ENCODE measurements at regions of chr5 and their contacts with region 1.

Region 1: GRCh38 chr5:126370796-126371718 is 52.2 kb upstream of the GRAMD2B start:
- DNase-seq: peak; percentile 69
- H3K4me3 Mint-ChIP-seq: peak overlapping the region; percentile 92
- H3K27ac Mint-ChIP-seq: peak overlapping the region; percentile 97
- H3K4me1 Mint-ChIP-seq: peaks cover 58% of the 10 kb centered on the region
- H3K27me3 Mint-ChIP-seq: no peaks in the 10 kb centered on the region
- CTCF ChIP-seq: peak; percentile 40

Region 2: DNA sequence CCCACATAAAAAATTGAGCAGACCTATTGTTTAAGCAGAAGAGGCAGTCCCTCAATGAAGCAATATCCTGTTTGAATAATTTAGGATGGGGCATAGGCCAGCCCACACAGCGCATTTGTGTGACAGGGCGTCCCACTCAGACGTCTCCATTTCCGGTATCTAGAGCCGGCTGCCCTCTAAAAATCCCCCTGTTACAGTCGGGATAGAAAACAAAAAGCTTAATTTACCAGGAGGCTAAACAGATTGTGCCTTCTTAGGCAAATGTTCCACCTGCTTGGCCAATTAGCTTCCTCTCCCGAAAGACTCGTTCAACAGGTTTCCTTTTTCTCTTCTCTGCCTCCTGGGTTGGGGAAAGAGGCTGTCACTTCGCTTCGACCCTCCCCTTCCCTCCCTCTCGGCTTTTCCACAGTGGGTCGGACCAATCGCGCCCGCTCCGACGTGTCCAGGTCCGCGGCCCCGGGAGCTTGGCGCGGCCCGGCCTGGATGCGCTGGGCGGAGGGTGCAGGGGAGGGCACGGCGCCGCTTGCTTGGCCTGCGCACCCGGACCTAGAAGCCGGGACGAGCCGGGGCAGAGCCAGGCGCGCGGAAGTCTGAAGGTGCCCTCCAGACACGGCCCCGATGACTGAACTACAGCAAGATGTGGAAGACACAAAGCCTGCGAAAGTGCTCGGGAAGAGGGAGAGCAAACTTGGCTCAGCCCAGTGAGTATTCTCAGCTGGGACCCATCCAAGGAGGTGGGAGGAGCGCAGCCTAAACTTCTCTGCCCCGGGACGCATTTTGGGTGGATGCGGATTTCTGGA is 52.1 kb after region 1 on chr5 and contains the start of gene GRAMD2B:
- CTCF ChIA-PET with region 1: interaction called, 8 read pairs
- intact Hi-C with region 1: loop called (anchors 5 kb)
- DNase-seq: peak; percentile 85
- H3K4me3 Mint-ChIP-seq: peak within 1 kb of the TSS; percentile 93
- H3K27ac Mint-ChIP-seq: peak within 1 kb of the TSS; percentile 81
- H3K4me1 Mint-ChIP-seq: peaks cover 13% of the 10 kb centered on the region
- H3K27me3 Mint-ChIP-seq: no peaks in the 10 kb centered on the region
- CTCF ChIP-seq: no peak
- total RNA-seq, gene GRAMD2B: 23.0 and 23.3 TPM in 2 replicates

Region 3: DNA sequence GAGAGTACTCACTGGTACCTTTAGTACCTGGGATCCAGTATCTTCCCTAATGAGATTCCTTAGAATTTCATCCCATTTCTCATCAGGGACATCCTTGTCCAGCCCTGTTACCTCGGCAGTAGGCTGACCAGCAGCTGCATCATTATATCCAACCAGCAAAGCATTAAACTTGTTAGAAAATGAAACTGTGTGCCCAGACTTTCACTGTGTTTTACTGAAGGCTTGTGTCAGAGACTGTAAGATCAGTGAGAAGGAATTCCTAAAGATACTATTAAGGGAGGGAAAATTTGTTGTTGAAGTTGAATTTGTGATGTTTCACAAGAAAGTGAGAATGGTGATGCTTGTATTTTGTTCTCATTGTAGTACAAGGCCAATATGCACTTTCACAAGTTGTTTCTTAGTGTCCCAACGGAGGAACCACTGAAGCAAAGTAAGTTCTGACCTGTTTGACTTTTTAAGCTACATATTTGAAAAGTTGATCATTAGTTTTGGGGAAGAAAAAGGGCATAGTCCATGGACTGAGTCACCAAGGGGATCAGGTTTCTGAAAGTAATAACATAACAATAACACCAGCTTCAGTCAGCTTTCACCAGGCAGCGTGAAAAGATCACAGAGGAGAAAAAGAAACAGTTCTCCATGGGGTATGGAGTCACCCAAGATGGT is 100.9 kb after region 1 on chr5:
- CTCF ChIA-PET with region 1: interaction called, 4 read pairs
- intact Hi-C with region 1: loop called (anchors 5 kb)
- DNase-seq: peak; percentile 40
- H3K4me3 Mint-ChIP-seq: peak overlapping the region; percentile 54
- H3K27ac Mint-ChIP-seq: peak overlapping the region; percentile 77
- H3K4me1 Mint-ChIP-seq: peaks cover 19% of the 10 kb centered on the region
- H3K27me3 Mint-ChIP-seq: no peaks in the 10 kb centered on the region
- CTCF ChIP-seq: no peak

Region 4: DNA sequence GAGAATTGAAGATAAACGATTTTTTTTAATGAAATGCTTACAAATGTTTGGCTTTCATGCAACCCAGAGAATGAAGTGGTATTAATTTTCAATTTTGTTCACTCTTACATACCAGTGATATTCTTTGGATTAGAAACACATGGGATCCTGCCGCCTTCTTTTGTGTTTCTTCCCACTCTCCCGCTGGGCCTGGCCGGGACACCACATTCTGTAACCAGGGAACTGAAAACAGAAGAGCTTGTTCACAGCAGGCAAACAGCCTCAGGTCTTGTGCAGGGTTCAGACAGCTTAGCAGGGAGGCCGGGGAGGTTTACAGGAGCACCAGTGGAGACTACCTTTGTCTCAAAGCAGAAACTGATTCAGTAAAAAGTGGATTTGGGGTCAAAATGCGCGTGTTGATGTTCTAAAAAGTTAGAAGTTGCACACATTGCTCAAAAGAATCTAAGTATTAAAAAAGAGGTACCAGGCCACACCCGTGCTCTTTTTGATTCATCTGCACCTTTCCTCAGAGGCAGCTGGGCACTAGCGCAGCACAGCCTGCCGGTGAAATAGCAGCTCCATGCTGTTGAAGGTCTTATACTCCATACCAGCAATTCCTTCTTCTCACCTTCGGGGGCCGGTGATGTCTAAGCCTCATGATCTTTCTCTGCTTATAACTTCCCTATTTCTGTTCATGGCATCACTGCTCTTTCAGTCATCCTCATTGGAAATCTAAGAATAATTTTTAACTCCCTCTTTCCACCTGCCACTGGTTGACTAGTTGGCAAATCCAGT is 119.3 kb after region 1 on chr5:
- CTCF ChIA-PET with region 1: no interaction called
- intact Hi-C with region 1: loop called (anchors 5 kb)
- DNase-seq: no peak
- H3K4me3 Mint-ChIP-seq: no peak overlapping the region
- H3K27ac Mint-ChIP-seq: no peak overlapping the region
- H3K4me1 Mint-ChIP-seq: no peaks in the 10 kb centered on the region
- H3K27me3 Mint-ChIP-seq: no peaks in the 10 kb centered on the region
- CTCF ChIP-seq: no peak

Region 5: GRCh38 chr5:126718246-126718868 is 347.3 kb after region 1 on chr5:
- CTCF ChIA-PET with region 1: no interaction called
- intact Hi-C with region 1: no loop called
- DNase-seq: no peak
- H3K4me3 Mint-ChIP-seq: no peak overlapping the region
- H3K27ac Mint-ChIP-seq: no peak overlapping the region
- H3K4me1 Mint-ChIP-seq: no peaks in the 10 kb centered on the region
- H3K27me3 Mint-ChIP-seq: no peaks in the 10 kb centered on the region
- CTCF ChIP-seq: no peak

Measured in Calu3 (cell line).